Caco-2 (cell line): ENCODE measurements at regions of chr5 and their contacts with region 1.

Region 1: DNA sequence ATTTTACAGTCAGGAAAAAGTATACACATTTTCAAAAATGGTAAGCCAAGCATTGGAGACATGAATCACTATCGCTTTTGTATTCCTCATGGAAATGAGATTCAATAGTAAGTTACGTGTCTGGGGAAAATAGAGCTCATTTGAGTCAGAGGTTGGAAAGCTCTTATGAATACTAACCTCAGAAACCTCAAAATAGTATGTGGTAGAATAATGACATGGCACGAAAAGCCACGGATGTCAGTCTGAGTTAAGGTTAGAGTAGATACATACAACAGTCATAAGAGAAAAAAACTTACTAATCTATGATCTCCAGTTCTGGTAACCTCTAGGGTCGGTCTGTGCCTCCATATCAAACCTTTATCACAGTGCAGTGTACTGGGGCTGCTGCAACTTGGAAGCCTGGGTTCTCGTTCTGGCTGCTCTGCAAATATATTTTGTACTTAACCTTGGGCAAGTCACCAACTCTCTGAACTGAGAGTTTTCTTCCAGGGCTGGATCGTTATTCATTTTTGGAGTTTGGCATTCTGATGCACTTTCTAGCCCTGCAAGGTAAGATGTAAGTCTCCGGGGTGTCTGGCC is 31.8 kb downstream of the MAP1B start:
- DNase-seq: no peak
- H3K4me3 ChIP-seq: no peak overlapping the region
- H3K4me3 Mint-ChIP-seq: no peak overlapping the region
- H3K27ac Mint-ChIP-seq: no peak overlapping the region
- H3K4me1 ChIP-seq: no peaks in the 10 kb centered on the region
- H3K4me1 Mint-ChIP-seq: no peaks in the 10 kb centered on the region
- H3K27me3 ChIP-seq: no peaks in the 10 kb centered on the region
- H3K27me3 Mint-ChIP-seq: peaks cover 11% of the 10 kb centered on the region
- CTCF ChIP-seq: no peak

Region 2: DNA sequence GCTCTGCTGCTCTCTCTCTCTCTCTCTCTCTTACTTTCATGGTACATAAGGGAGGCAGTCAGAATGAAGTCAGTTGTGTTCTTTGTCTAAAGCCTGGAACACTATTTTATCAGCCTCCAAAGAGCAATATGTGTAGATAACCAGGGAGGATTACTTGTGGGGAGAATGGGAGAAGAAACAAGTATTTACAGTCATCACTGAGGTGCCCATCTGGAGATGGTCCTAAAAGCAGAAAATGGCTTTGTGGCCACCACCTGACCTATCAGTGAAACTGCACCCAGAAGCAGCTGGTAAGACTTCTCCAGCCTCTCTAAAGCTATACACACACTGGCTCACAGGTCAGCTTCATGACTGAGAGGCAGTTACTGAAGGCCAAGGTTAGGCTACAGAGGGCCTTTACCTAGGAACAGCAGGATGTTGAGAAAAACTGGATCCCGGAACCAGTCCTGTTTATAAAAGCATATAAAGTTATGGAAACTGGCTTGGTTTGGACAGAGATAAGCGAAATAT is 105.9 kb after region 1 on chr5:
- CTCF ChIA-PET with region 1: interaction called, 3 read pairs
- POLR2A ChIA-PET with region 1: no interaction called
- intact Hi-C with region 1: loop called (anchors 5 kb)
- DNase-seq: peak; percentile 19 to 41
- H3K4me3 ChIP-seq: no peak overlapping the region
- H3K4me3 Mint-ChIP-seq: no peak overlapping the region
- H3K27ac Mint-ChIP-seq: no peak overlapping the region
- H3K4me1 ChIP-seq: no peaks in the 10 kb centered on the region
- H3K4me1 Mint-ChIP-seq: peaks cover 11% of the 10 kb centered on the region
- H3K27me3 ChIP-seq: no peaks in the 10 kb centered on the region
- H3K27me3 Mint-ChIP-seq: no peaks in the 10 kb centered on the region
- CTCF ChIP-seq: peak; percentile 36 to 39

Region 3: DNA sequence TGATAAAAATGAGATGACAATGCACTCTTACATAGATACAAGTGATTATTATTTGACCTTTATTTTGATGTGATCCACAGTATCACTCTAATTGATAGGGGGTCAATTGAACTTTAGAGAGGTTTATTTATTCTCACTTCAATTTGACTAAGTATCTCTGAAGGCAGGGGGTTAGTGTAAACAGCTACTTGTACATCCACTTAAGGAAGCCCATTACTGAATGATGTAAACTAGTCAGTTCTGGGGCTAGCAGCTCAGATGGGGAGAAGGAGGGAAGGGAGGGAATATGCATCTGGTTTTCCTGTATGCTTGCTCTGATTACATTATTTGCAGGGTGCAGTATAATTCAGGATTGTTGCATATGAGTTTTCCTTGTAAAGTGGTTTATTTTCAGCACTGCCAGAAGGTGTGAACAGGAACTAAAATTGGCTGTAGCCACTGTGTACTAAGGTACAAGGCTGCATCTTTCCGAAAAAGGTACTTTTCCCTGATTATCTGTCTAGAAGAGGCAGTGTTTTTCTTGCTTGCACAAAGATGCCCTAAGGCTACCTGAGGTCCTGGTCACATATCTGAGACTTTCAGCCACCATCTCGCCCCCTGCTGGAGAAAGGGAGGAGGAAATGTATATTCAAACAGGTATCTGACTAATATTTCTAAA is 129.8 kb after region 1 on chr5:
- CTCF ChIA-PET with region 1: no interaction called
- POLR2A ChIA-PET with region 1: no interaction called
- intact Hi-C with region 1: loop called (anchors 5 kb)
- DNase-seq: peak; percentile 72 to 75
- H3K4me3 ChIP-seq: no peak overlapping the region
- H3K4me3 Mint-ChIP-seq: no peak overlapping the region
- H3K27ac Mint-ChIP-seq: peak overlapping the region; percentile 6
- H3K4me1 ChIP-seq: 0 out of 2 replicates have a peak, but pooled peaks cover 5% of the 10 kb centered on the region
- H3K4me1 Mint-ChIP-seq: peaks cover 7% of the 10 kb centered on the region
- H3K27me3 ChIP-seq: no peaks in the 10 kb centered on the region
- H3K27me3 Mint-ChIP-seq: no peaks in the 10 kb centered on the region
- CTCF ChIP-seq: peak; percentile 64 to 77

Region 4: GRCh38 chr5:72307968-72308852 is 169.2 kb after region 1 on chr5:
- CTCF ChIA-PET with region 1: no interaction called
- POLR2A ChIA-PET with region 1: interaction called, 3 read pairs
- intact Hi-C with region 1: loop called (anchors 1 kb)
- DNase-seq: peak; percentile 97 to 98
- H3K4me3 ChIP-seq: peak overlapping the region; percentile 57
- H3K4me3 Mint-ChIP-seq: peak overlapping the region; percentile 84
- H3K27ac Mint-ChIP-seq: peak overlapping the region; percentile 84
- H3K4me1 ChIP-seq: peaks cover 19% of the 10 kb centered on the region
- H3K4me1 Mint-ChIP-seq: peaks cover 18% of the 10 kb centered on the region
- H3K27me3 ChIP-seq: no peaks in the 10 kb centered on the region
- H3K27me3 Mint-ChIP-seq: no peaks in the 10 kb centered on the region
- CTCF ChIP-seq: peak; percentile 76 to 86